Posterior cingulate gyrus (tissue), 11 donors: ENCODE measurements at regions of chr5 and their contacts with region 1.

Region 1: DNA sequence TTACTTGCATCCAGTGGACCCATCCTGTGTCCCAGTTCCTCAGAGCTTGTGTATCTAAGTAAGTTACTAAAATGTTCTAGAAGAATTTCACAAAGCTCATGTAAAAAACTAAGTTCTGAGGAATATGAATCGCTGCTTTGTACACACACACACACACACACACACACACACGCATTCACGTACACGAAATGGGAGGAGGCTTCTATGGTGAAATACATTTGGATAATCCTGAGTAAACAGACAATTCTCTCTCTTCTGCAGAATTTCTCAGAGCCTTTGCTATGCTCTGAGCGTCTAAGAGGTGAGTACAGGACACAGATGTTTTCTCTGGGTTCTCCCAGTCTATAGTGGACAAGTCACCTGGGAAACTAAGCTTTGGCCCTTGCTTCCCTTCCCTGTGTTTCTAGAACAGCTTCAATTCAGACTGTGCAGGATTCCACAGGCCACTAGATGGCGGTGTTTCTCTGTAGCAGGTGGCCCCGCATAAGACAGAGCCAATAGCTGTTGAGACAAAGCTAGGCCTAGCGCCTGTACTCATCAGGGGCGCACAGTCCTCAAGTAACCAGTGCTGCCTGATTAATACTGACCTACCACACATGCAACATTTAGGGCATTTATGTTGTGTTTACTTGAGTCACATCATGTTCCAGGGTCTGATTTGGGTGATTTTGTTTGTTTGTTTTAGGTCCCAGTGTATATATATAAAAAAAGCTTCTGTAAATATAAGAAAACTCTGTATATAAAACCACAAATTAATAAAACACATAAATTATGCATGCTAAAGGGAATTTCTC is 114.8 kb downstream of the LIFR start:
- DNase-seq: peak; percentile 74 to 98 (median 92)

Region 2: GRCh38 chr5:38551030-38552017 is 109.7 kb after region 1 on chr5:
- intact Hi-C with region 1: loop called (anchors 2 kb)
- DNase-seq: peak in 1 of 10 donors; percentile 32

Region 3: GRCh38 chr5:38666668-38667498 is 225.2 kb after region 1 on chr5:
- intact Hi-C with region 1: loop called (anchors 2 kb)
- DNase-seq: no peak

Region 4: GRCh38 chr5:39074016-39074886 is 632.6 kb after region 1 on chr5 and contains the start of gene RICTOR:
- intact Hi-C with region 1: no loop called
- DNase-seq: peak; percentile 86 to 99 (median 89)